IMR-90 (cell line): ENCODE measurements at regions of chr11 and their contacts with region 1.

Region 1: DNA sequence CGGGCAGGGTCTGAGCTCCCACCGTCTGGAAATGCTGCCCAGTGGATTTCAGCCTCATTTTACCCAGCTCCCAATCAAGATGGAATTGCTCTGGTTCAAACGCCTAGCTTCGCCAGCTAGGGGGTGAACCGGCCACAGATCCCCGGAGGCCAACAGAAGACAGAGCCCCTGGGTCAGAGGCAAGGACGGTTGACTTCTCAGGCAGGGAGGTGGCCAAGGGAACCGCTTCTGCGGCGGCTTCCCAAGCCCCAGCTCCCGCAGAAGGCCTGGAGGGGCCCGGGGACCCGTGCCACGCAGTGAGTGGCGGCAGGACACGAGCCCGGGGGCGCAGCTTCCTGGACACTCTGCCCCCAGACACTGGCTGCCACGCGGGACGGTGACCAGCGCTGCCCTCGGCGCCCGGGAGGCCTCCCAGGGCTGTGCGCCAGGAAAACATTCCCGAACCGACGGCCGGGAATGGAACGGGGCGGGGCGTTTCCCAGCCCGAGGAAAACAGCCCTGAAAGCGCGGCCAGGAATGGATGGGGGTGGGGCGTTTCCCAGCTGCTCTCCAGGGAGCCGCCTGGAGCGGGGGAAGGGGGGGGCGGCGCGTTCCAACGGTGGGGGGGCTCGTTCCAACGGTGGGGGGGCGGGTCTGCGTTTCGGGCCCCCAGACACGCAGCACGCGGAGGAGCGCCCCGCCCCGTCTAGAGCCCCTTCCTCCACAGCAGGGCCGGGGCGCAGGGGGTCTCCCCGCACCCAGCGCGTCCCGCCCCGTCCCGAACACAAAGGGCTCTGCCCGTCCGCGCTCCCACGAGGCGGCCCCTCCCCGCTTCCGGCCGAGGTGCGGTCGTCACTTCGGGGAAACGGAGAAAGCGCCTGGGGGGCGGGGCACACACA is 13.5 kb upstream of the B4GALNT4 start:
- DNase-seq: peak; percentile 94
- ATAC-seq: peak; percentile 93
- H3K4me3 ChIP-seq: peak overlapping the region; percentile 36; the same call in 1 of the 2 replicates
- H3K27ac ChIP-seq: peak overlapping the region; percentile 99
- H3K4me1 ChIP-seq: peaks cover 8% of the 10 kb centered on the region
- H3K27me3 ChIP-seq: peaks cover 8% of the 10 kb centered on the region
- CTCF ChIP-seq: no peak
- POLR2A ChIP-seq: peak; percentile 42; the same call in 1 of the 2 replicates
- RAD21 ChIP-seq: no peak; the same call in 1 of the 2 replicates

Region 2: DNA sequence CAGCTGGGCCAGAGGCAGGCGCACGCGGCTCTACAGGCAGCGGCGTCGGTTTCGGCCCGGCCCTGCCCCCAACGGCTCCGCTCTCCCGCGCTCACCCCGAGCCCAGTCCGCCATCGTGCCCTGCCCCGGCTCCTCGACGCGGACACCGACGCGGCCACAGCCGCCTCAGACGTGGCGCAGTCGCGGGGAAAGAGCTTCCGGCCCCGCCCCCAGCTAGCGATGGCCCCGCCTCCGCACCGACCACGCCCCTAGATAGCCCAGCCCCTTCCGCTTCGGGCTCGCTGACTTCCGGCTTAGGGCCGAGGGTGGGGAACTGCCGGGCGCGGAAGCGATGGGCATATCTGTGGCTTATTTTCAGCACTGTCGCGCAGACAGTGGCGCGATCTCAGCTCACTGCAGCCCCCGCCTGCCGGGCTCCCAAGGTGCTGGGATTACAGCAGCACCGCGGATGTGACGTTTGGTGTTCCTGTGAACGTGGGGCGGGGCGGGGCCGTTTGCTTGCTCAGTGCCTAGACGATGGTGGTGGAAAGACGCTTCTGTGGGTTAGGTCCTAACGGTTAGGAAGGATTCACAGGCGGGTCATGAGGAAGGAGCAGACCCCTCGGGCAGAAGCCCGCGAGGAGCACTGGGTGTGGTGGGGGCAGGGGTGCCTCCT is 148.5 kb before region 1 on chr11 and contains the starts of genes BET1L and RIC8A:
- CTCF ChIA-PET with region 1: no interaction called
- POLR2A ChIA-PET with region 1: no interaction called
- dilution Hi-C with region 1: no loop called
- in situ Hi-C with region 1: no loop called
- intact Hi-C with region 1: loop called (anchors 2 kb)
- DNase-seq: peak; percentile 99
- ATAC-seq: peak; percentile 76
- H3K4me3 ChIP-seq: peak within 1 kb of the TSS; percentile 70
- H3K27ac ChIP-seq: peak within 1 kb of the TSS; percentile 88
- H3K4me1 ChIP-seq: peaks cover 25% of the 10 kb centered on the region
- H3K27me3 ChIP-seq: no peaks in the 10 kb centered on the region
- CTCF ChIP-seq: no peak
- POLR2A ChIP-seq: peak; percentile 96
- RAD21 ChIP-seq: no peak
- total RNA-seq, gene BET1L: 10.0 and 10.8 TPM in 2 replicates
- total RNA-seq, gene RIC8A: 114 and 129 TPM in 2 replicates

Region 3: GRCh38 chr11:313787-314547 is 41.9 kb before region 1 on chr11 and contains the start of gene IFITM1:
- CTCF ChIA-PET with region 1: no interaction called
- POLR2A ChIA-PET with region 1: interaction called, 4 read pairs
- dilution Hi-C with region 1: no loop called
- in situ Hi-C with region 1: loop called (anchors 10 kb)
- intact Hi-C with region 1: loop called (anchors 2 kb)
- DNase-seq: peak; percentile 84
- ATAC-seq: peak; percentile 36
- H3K4me3 ChIP-seq: peak within 1 kb of the TSS; percentile 44
- H3K27ac ChIP-seq: peak within 1 kb of the TSS; percentile 85
- H3K4me1 ChIP-seq: peaks cover 23% of the 10 kb centered on the region
- H3K27me3 ChIP-seq: no peaks in the 10 kb centered on the region
- CTCF ChIP-seq: no peak
- POLR2A ChIP-seq: no peak; the same call in 1 of the 2 replicates
- RAD21 ChIP-seq: no peak
- total RNA-seq, gene IFITM1: 14.4 and 24.2 TPM in 2 replicates

Region 4: GRCh38 chr11:469684-470560 is 114.1 kb after region 1 on chr11:
- CTCF ChIA-PET with region 1: no interaction called
- POLR2A ChIA-PET with region 1: no interaction called
- dilution Hi-C with region 1: no loop called
- in situ Hi-C with region 1: no loop called
- intact Hi-C with region 1: no loop called
- DNase-seq: peak; percentile 81
- ATAC-seq: peak; percentile 93
- H3K4me3 ChIP-seq: peak overlapping the region; percentile 6; the same call in 1 of the 2 replicates
- H3K27ac ChIP-seq: peak overlapping the region; percentile 99
- H3K4me1 ChIP-seq: peaks cover 17% of the 10 kb centered on the region
- H3K27me3 ChIP-seq: no peaks in the 10 kb centered on the region
- CTCF ChIP-seq: peak; percentile 46
- POLR2A ChIP-seq: no peak
- RAD21 ChIP-seq: no peak

Region 5: GRCh38 chr11:709109-709997 is 353.5 kb after region 1 on chr11:
- CTCF ChIA-PET with region 1: no interaction called
- POLR2A ChIA-PET with region 1: no interaction called
- dilution Hi-C with region 1: no loop called
- in situ Hi-C with region 1: no loop called
- intact Hi-C with region 1: no loop called
- DNase-seq: no peak
- ATAC-seq: no peak
- H3K4me3 ChIP-seq: no peak overlapping the region
- H3K27ac ChIP-seq: no peak overlapping the region
- H3K4me1 ChIP-seq: peaks cover 21% of the 10 kb centered on the region
- H3K27me3 ChIP-seq: no peaks in the 10 kb centered on the region
- CTCF ChIP-seq: no peak
- POLR2A ChIP-seq: no peak
- RAD21 ChIP-seq: no peak